Activated CD4-positive, alpha-beta T cell treated with anti-CD3 and anti-CD28 coated beads for 36 hours (primary cell): ENCODE measurements at regions of chr17 and their contacts with region 1.

Region 1: GRCh38 chr17:67139784-67140657 is 95.7 kb downstream of the CACNG1 start:
- DNase-seq: peak; percentile 19
- ATAC-seq: peak; percentile 53
- H3K4me3 Mint-ChIP-seq: no peak overlapping the region
- H3K27ac Mint-ChIP-seq: peak overlapping the region; percentile 32
- H3K4me1 Mint-ChIP-seq: peaks cover 33% of the 10 kb centered on the region
- H3K27me3 Mint-ChIP-seq: no peaks in the 10 kb centered on the region

Region 2: GRCh38 chr17:67343251-67343650 is 203.2 kb after region 1 on chr17:
- CTCF ChIA-PET with region 1: no interaction called
- POLR2A ChIA-PET with region 1: no interaction called
- intact Hi-C with region 1: loop called in 1 of 2 experiments (anchors 10 kb)
- DNase-seq: no peak
- ATAC-seq: no peak
- H3K4me3 Mint-ChIP-seq: no peak overlapping the region
- H3K27ac Mint-ChIP-seq: peak overlapping the region; percentile 35
- H3K4me1 Mint-ChIP-seq: no peaks in the 10 kb centered on the region
- H3K27me3 Mint-ChIP-seq: no peaks in the 10 kb centered on the region